ENCODE measurements at regions of chr3 and their contacts with region 1.

Region 1: GRCh38 chr3:40524568-40525285 is at the start of gene ZNF621:
- DNase-seq: peak; percentile 60 to 89 (median 80)
- ATAC-seq: peak; percentile 93
- H3K4me3 ChIP-seq: peak within 1 kb of the TSS; percentile 80
- H3K4me3 Mint-ChIP-seq: peak within 1 kb of the TSS; percentile 96
- H3K27ac ChIP-seq: peak within 1 kb of the TSS; percentile 73 to 85
- H3K27ac Mint-ChIP-seq: peak within 1 kb of the TSS; percentile 88
- H3K4me1 ChIP-seq: peaks cover 20% of the 10 kb centered on the region
- H3K4me1 Mint-ChIP-seq: peaks cover 25% of the 10 kb centered on the region
- H3K27me3 ChIP-seq: no peaks in the 10 kb centered on the region
- H3K27me3 Mint-ChIP-seq: no peaks in the 10 kb centered on the region
- CTCF ChIP-seq: no peak
- total RNA-seq, gene ZNF621: 8.6 to 8.8 TPM

Region 2: DNA sequence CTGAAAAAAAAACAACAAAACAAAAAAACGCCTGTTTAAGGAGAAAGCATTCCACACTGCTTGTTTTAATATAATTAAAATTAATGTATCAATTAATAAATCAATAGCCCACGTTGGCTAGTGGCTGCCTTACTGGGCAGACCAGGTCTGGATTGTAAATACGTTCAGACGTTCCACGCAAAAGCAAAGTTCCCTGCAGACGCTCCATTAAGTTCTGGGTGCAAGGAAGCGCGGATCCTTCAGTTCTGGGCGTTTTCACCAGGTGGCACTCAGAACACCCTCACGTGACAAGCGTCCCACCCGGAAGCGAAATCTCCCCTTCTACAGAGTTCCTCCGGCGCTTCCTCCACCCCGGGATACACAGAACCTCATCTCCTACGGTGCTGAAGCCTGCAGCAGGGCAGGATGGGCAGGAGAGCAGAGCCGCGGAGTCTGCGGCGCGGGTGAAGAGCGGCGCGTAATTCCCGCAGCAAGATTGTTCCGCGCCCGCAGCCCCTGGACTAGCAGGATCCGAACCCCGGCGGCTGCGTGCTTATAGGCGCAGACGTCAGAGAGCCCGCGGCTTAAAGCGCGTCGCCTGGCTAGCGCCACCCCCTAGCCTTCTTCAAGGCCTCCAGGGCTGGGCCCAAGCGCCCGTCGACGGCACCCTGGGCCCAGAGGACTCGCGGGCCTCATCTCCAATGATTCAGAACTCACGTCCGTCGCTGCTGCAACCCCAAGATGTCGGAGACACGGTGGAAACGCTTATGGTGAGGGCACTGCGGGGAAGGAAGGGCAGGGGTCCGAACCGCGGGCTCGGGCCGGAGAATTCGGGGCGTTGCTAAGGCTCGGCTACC is 1141.5 kb before region 1 on chr3 and contains the start of gene SLC25A38:
- CTCF ChIA-PET with region 1: no interaction called
- POLR2A ChIA-PET with region 1: no interaction called
- intact Hi-C with region 1: loop called in 1 of 2 experiments (anchors 10 kb)
- DNase-seq: peak; percentile 58 to 94 (median 75)
- ATAC-seq: peak; percentile 82
- H3K4me3 ChIP-seq: peak within 1 kb of the TSS; percentile 95
- H3K4me3 Mint-ChIP-seq: peak within 1 kb of the TSS; percentile 94
- H3K27ac ChIP-seq: peak within 1 kb of the TSS; percentile 93 to 97
- H3K27ac Mint-ChIP-seq: peak within 1 kb of the TSS; percentile 97
- H3K4me1 ChIP-seq: peaks cover 53% of the 10 kb centered on the region
- H3K4me1 Mint-ChIP-seq: peaks cover 55% of the 10 kb centered on the region
- H3K27me3 ChIP-seq: no peaks in the 10 kb centered on the region
- H3K27me3 Mint-ChIP-seq: no peaks in the 10 kb centered on the region
- CTCF ChIP-seq: peak; percentile 59
- total RNA-seq, gene SLC25A38: 43.2 to 44.7 TPM

Region 3: DNA sequence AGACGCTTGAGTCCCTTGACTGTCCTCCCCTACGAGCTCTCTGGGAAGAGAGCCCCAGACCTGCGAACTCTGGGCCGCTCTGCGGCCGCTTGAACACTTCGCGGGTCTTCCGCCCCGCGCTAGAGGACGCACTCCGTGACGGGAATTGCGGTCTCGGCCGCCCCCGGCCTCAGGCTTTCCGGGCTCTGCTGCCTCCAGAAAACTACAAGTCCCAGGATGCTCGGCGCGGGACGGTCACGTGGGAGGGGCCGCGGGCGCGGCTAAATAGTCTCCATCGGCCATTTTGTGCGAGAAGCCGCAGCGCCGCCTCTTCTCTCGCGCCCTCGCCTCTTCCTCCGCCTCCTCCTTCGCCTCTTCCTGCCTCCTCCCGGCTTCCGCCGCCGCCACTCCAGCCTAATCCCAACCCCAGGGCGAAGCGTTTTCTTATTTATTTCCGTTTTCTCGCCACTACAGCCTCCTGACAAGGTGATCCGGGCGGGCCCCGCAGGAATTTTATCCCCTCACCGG is 215.3 kb before region 1 on chr3 and contains the start of gene EIF1B:
- CTCF ChIA-PET with region 1: no interaction called
- POLR2A ChIA-PET with region 1: interaction called, 3 read pairs
- intact Hi-C with region 1: loop called in 1 of 2 experiments (anchors 2 kb)
- DNase-seq: peak; percentile 96 to 99 (median 98)
- ATAC-seq: peak; percentile 89
- H3K4me3 ChIP-seq: peak within 1 kb of the TSS; percentile 93
- H3K4me3 Mint-ChIP-seq: peak within 1 kb of the TSS; percentile 100
- H3K27ac ChIP-seq: peak within 1 kb of the TSS; percentile 91 to 95
- H3K27ac Mint-ChIP-seq: peak within 1 kb of the TSS; percentile 100
- H3K4me1 ChIP-seq: peaks cover 11% of the 10 kb centered on the region
- H3K4me1 Mint-ChIP-seq: peaks cover 50% of the 10 kb centered on the region
- H3K27me3 ChIP-seq: no peaks in the 10 kb centered on the region
- H3K27me3 Mint-ChIP-seq: no peaks in the 10 kb centered on the region
- CTCF ChIP-seq: peak; percentile 90
- total RNA-seq, gene EIF1B: 112 to 120 TPM

Region 4: GRCh38 chr3:40476478-40477470 is 48.0 kb before region 1 on chr3 and contains the start of gene ZNF619:
- CTCF ChIA-PET with region 1: no interaction called
- POLR2A ChIA-PET with region 1: interaction called, 9 read pairs
- intact Hi-C with region 1: loop called (anchors 1 kb)
- DNase-seq: peak in 13 of 14 experiments; percentile 22 to 80 (median 46)
- ATAC-seq: peak; percentile 80
- H3K4me3 ChIP-seq: peak within 1 kb of the TSS; percentile 80
- H3K4me3 Mint-ChIP-seq: peak within 1 kb of the TSS; percentile 87
- H3K27ac ChIP-seq: peak within 1 kb of the TSS in 1 of 2 donors; percentile 61
- H3K27ac Mint-ChIP-seq: peak within 1 kb of the TSS; percentile 64
- H3K4me1 ChIP-seq: peaks cover 17% of the 10 kb centered on the region
- H3K4me1 Mint-ChIP-seq: peaks cover 24% of the 10 kb centered on the region
- H3K27me3 ChIP-seq: no peaks in the 10 kb centered on the region
- H3K27me3 Mint-ChIP-seq: no peaks in the 10 kb centered on the region
- CTCF ChIP-seq: no peak
- total RNA-seq, gene ZNF619: 2.6 to 2.9 TPM

Region 5: DNA sequence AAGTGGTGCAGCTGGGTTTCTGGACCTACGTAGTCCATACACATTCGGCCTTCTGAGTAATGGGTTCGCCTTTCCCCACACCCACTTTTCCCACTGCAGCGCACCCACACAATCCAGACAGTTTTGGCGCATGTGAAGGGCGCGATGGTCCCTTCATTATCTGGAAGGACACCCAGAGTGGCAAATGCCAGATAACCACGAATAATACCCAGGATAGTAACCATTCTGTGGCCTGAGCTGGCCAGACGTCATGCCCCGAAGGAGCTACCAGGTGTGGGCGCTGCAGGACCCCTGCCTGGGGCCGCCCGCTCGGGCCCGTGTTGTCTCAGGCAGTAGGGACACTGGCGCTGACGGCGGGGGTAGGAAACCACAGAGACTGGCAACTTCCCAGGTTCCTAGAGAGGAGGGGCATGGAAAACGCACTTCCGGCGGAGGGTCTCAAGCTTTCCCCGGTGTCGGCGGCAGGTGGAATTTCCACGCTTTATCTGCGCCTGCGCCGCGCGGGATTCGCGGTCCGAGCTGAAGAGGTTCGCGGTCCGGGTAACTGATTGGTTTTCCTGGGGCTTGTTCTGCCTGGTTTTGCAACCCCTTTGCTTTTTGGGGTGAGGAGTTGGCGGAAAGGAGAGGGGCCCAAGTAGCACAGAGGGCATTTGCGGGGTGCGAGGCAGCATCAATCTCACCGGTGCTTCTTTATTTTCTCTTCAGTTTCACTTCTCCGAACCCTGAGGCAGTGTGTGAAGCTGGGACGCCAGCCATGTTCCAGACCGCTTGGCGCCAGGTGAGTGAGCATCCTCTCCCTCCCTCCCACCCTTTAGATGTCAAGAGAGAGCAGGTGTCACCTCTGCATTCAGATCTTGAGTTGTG is 18.9 kb before region 1 on chr3 and contains the start of gene ZNF620:
- CTCF ChIA-PET with region 1: interaction called, 5 read pairs
- POLR2A ChIA-PET with region 1: interaction called, 11 read pairs
- intact Hi-C with region 1: no loop called
- DNase-seq: peak; percentile 5 to 73 (median 36)
- ATAC-seq: peak; percentile 69
- H3K4me3 ChIP-seq: peak within 1 kb of the TSS; percentile 83
- H3K4me3 Mint-ChIP-seq: peak within 1 kb of the TSS; percentile 97
- H3K27ac ChIP-seq: no peak within 1 kb of the TSS
- H3K27ac Mint-ChIP-seq: peak within 1 kb of the TSS; percentile 70
- H3K4me1 ChIP-seq: peaks cover 7% of the 10 kb centered on the region
- H3K4me1 Mint-ChIP-seq: peaks cover 23% of the 10 kb centered on the region
- H3K27me3 ChIP-seq: no peaks in the 10 kb centered on the region
- H3K27me3 Mint-ChIP-seq: no peaks in the 10 kb centered on the region
- CTCF ChIP-seq: peak; percentile 31
- total RNA-seq, gene ZNF620: 0.82 to 1.0 TPM

Region 6: DNA sequence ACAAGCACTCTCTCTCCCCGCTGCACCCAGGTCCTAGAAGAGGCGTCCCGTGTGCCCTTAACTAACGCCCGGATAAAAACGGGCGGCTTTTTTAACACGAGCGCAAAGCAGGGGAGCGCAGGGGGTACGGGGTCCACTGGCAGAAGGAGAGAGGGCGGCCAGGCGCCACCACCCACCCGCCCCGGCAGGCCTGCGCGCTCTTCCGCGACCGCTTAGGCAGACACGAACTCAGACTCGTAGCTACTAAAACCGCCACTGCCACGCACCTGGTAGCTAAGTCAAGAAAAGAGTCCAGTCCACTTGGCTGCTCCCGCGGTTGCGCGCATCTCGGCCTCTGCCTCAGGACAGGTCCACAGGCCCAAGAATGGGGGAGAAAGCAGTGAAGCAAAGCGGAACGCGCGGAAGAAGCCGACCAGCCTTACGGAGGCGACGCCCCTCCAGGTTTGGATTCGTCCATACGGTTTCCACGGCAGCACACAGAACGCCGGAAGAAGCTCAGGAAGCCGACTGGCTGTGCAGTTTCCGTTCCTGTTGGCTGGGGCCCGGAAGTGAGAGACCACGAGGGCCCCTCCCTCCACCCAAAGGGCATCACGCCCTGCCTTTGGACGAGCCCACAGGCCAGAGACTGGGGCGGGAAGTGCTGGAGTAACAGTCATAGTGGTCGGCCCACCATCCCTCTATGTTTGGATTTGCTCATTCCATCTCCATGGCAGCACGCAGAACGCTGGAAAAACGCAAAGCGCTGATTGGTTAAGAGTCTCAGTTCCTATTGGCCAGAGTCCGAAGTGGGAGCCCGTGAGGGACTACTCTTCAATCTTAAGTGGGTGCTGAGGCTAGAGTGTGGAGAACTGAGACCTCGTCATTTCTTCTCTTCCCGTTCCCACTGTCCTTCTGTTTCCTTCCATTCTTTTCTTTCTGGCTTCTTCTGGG is 1437.3 kb after region 1 on chr3 and contains the start of gene ULK4:
- CTCF ChIA-PET with region 1: no interaction called
- POLR2A ChIA-PET with region 1: no interaction called
- intact Hi-C with region 1: loop called in 1 of 2 experiments (anchors 5 kb)
- DNase-seq: peak; percentile 87 to 99 (median 92)
- ATAC-seq: peak; percentile 83
- H3K4me3 ChIP-seq: peak within 1 kb of the TSS; percentile 100
- H3K4me3 Mint-ChIP-seq: peak within 1 kb of the TSS; percentile 100
- H3K27ac ChIP-seq: peak within 1 kb of the TSS; percentile 86 to 97
- H3K27ac Mint-ChIP-seq: peak within 1 kb of the TSS; percentile 98
- H3K4me1 ChIP-seq: peaks cover 19% of the 10 kb centered on the region
- H3K4me1 Mint-ChIP-seq: peaks cover 26% of the 10 kb centered on the region
- H3K27me3 ChIP-seq: no peaks in the 10 kb centered on the region
- H3K27me3 Mint-ChIP-seq: no peaks in the 10 kb centered on the region
- CTCF ChIP-seq: no peak
- total RNA-seq, gene ULK4: 23.8 to 28.6 TPM

Measured in CD4-positive, alpha-beta T cell (primary cell).